ENCODE measurements at regions of chr2 and their contacts with region 1.

Region 1: DNA sequence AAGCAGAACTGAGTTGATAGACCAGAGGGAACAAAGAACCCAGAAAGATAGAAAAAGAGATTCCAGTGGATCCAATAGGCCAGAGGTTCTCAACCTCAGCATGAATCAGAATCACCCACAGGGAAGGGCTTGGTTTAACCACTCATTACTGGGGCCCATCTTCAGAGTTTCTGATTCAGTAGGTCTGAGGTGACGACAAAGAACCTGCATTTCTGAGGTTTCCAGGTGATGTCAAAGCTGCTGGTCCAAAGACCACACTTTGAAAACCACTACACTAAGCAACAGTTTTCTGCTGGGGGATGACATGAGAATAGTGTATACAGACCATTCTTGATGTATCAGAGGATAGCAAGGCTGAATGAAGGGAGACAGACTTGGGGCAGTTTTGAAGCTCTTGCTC is 296.9 kb upstream of the STON1 start:
- DNase-seq: no peak
- ATAC-seq: peak; percentile 84
- H3K4me3 ChIP-seq: no peak overlapping the region
- H3K27ac ChIP-seq: no peak overlapping the region
- H3K4me1 ChIP-seq: peaks cover 10% of the 10 kb centered on the region
- H3K27me3 ChIP-seq: no peaks in the 10 kb centered on the region
- CTCF ChIP-seq: no peak
- EP300 ChIP-seq: no peak
- POLR2A ChIP-seq: no peak
- RAD21 ChIP-seq: no peak

Region 2: DNA sequence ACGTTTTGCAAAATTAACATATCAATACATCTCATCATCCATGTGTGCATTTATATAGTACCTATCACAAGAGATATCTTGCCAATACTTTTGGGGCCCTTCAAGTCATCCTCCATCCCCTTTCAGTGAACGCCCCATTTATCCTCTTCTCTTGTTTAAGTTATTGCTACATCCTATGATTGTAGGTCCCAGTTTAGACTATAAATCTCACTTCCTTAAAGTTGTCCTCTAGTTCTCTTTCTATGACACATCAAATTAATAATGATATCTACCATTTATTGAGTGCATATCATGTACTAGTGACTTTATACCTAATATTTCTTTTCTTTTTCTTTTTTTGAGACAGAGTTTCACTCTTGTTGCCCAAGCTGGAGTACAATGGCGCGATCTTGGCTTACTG is 297.9 kb before region 1 on chr2:
- CTCF ChIA-PET with region 1: no interaction called
- POLR2A ChIA-PET with region 1: interaction called, 10 read pairs
- RAD21 ChIA-PET with region 1: no interaction called
- SMC1A ChIA-PET with region 1: no interaction called
- in situ Hi-C with region 1: no loop called
- intact Hi-C with region 1: no loop called
- DNase-seq: no peak
- ATAC-seq: no peak
- H3K4me3 ChIP-seq: no peak overlapping the region
- H3K27ac ChIP-seq: no peak overlapping the region
- H3K4me1 ChIP-seq: no peaks in the 10 kb centered on the region
- H3K27me3 ChIP-seq: peaks cover 0 to 3% of the 10 kb centered on the region in 2 experiments; a peak in 1 of 4 replicates
- CTCF ChIP-seq: no peak
- EP300 ChIP-seq: no peak
- POLR2A ChIP-seq: no peak
- RAD21 ChIP-seq: no peak

Region 3: DNA sequence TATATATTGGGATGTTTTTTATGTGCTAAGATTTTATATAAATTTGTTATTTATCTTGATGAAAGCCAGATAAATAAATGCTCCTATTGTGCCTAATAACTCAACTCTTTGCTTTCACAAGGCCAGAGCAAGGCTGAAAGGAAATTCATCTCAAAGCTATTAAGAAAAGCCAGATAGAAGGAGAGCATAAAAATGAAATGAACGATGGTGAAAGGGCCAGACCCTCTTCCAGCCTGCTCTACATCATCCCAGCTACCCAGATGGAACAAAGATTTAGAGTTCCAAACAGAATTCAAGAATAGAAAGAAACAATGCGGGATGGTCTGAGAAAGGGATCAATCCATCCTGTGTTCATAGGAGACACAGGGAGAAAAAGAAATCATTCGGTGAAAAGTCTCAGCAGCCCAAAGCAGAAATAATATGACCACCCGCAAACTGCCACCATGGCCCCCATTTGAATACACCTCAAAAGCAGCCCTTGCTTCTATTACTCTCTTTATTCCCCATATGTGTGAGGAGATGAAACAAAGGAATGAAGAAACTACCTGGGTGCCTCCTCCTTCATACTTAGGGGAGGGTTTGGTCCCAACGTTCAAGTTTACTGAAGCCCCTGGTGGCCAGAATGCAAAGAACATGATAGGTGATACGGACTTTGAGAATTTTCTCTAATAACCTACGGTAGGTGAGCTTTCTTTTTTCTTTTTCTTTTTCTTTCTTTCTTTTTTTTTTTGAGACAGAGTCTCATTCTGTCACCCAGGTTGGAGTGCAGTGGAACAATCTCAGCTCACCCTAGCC is 216.6 kb before region 1 on chr2:
- CTCF ChIA-PET with region 1: no interaction called
- POLR2A ChIA-PET with region 1: no interaction called
- RAD21 ChIA-PET with region 1: no interaction called
- SMC1A ChIA-PET with region 1: no interaction called
- in situ Hi-C with region 1: no loop called
- intact Hi-C with region 1: no loop called
- DNase-seq: no peak
- ATAC-seq: peak; percentile 37; the same call in 1 of the 3 replicates
- H3K4me3 ChIP-seq: no peak overlapping the region
- H3K27ac ChIP-seq: no peak overlapping the region
- H3K4me1 ChIP-seq: no peaks in the 10 kb centered on the region
- H3K27me3 ChIP-seq: no peaks in the 10 kb centered on the region
- CTCF ChIP-seq: 0 out of 6 replicates have a peak, but pooled peaks of 2 of the 3 experiments have one; percentile 2 to 15
- EP300 ChIP-seq: no peak
- POLR2A ChIP-seq: no peak
- RAD21 ChIP-seq: no peak

Region 4: DNA sequence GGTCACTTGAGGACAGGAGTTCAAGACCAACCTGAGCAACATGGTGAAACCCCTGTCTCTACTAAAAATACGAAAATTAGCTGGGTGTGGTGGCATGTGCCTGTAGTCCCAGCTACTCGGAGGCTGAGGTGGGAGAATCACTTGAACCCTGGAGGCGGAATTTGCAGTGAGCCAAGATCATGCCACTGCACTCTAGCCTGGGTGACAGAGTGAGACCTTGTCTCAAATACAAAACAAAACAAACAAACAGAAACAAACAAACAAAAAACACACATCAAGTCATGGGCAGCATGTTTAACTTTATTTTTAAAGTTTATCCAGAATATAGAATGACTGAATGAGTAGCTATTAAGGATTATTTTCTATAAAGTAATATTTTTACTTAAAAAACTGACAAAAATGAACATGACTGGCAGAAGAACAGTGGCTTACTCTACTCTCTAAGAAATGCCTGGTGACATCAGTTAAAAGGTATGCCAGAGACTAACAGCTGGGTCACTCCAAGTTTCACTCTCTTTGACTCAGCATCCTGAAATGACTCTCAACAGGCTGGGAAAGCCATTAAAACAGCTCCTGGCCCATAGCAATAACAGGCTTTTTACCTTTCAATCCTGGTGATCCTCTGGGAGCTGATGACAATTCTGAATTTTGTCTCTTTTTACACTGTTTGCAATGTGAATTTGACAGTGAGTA is 15.4 kb after region 1 on chr2:
- CTCF ChIA-PET with region 1: interaction called, 4 read pairs
- POLR2A ChIA-PET with region 1: interaction called, 3 read pairs
- RAD21 ChIA-PET with region 1: no interaction called
- SMC1A ChIA-PET with region 1: interaction called, 5 read pairs
- in situ Hi-C with region 1: no loop called
- intact Hi-C with region 1: loop called (anchors 2 kb)
- DNase-seq: peak; percentile 48
- ATAC-seq: peak; percentile 89
- H3K4me3 ChIP-seq: no peak overlapping the region
- H3K27ac ChIP-seq: peak overlapping the region; percentile 40; the same call in 1 of the 2 replicates
- H3K4me1 ChIP-seq: peaks cover 19% of the 10 kb centered on the region
- H3K27me3 ChIP-seq: no peaks in the 10 kb centered on the region
- CTCF ChIP-seq: no peak
- EP300 ChIP-seq: 0 out of 4 replicates have a peak, but pooled peaks of 1 of the 2 experiments have one; percentile 11
- POLR2A ChIP-seq: no peak
- RAD21 ChIP-seq: no peak

Region 5: GRCh38 chr2:49167131-49167530 is 934.1 kb after region 1 on chr2:
- CTCF ChIA-PET with region 1: no interaction called
- POLR2A ChIA-PET with region 1: no interaction called
- RAD21 ChIA-PET with region 1: no interaction called
- SMC1A ChIA-PET with region 1: no interaction called
- in situ Hi-C with region 1: no loop called
- intact Hi-C with region 1: no loop called
- DNase-seq: no peak
- ATAC-seq: no peak
- H3K4me3 ChIP-seq: no peak overlapping the region
- H3K27ac ChIP-seq: no peak overlapping the region
- H3K4me1 ChIP-seq: no peaks in the 10 kb centered on the region
- H3K27me3 ChIP-seq: no peaks in the 10 kb centered on the region
- CTCF ChIP-seq: no peak
- EP300 ChIP-seq: no peak
- POLR2A ChIP-seq: no peak
- RAD21 ChIP-seq: no peak

Measured in GM12878 (cell line).